Activated naive CD4-positive, alpha-beta T cell treated with anti-CD3 and anti-CD28 coated beads for 36 hours (primary cell): ENCODE measurements at regions of chr6 and their contacts with region 1.

Region 1: DNA sequence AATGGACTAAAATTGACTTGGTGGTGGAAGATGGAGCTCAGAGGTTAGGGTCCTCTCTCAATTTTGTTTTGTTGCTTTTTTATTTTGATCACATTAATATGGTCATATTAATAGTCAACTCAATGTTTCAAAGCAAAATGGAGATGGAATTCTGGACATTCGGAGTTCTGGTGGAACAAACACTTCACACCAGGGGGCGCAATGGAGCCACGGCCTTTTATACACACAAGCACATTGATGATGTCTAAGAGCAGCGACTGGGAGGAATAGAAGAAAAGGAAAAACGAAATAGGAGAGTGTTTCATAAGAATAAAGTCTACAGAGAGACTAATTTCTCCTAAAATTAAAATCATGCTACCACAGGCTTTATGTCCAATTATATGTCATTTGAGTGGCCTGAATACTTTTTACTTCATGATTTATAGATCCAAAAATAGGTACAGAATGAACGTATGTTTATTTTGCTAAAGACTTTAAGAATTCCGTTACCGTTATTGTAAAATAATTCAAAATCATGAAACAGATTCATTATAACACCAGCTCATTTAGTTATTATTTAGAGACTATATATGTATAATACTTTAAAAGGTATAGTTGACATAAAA is 197.6 kb upstream of the SASH1 start:
- DNase-seq: peak; percentile 83
- H3K4me3 Mint-ChIP-seq: no peak overlapping the region
- H3K27ac Mint-ChIP-seq: no peak overlapping the region
- H3K4me1 Mint-ChIP-seq: peaks cover 16% of the 10 kb centered on the region
- H3K27me3 Mint-ChIP-seq: no peaks in the 10 kb centered on the region

Region 2: DNA sequence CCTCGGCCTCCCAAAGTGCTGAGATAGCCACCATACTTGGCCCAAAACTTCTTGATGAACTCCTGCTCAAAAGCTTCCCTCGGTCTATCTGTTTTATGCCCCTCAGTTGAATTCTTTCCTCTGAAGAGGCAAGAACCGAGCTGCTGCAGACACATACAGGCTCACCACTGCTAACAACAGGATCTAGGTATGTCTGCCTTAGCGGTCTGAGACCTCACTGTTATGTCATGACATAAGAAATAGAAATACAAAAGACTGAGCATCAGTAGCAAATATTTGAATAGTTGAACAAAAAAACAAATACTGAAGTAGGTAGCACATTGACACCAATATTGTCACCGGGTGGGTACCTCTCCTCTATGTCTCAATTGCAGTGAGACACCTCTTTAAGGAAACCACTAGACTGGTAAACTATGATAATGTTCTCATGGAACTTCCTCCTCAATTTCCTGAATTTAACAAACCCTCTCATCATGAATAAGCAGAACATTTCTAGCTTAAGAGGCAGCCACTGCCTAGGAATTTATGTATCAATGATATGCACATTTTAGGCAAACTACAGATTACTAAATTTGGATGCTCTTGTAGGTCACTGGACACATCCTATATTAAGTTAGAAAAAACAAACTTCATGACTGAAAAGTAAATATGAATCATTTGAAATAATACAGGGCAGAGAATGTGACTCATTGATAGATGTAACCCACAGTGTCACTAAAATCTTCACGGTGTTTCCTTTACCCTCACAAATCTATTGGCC is 950.2 kb before region 1 on chr6:
- CTCF ChIA-PET with region 1: no interaction called
- intact Hi-C with region 1: loop called (anchors 2 kb)
- DNase-seq: no peak
- H3K4me3 Mint-ChIP-seq: peak overlapping the region; percentile 25
- H3K27ac Mint-ChIP-seq: peak overlapping the region; percentile 88
- H3K4me1 Mint-ChIP-seq: peaks cover 22% of the 10 kb centered on the region
- H3K27me3 Mint-ChIP-seq: no peaks in the 10 kb centered on the region

Region 3: DNA sequence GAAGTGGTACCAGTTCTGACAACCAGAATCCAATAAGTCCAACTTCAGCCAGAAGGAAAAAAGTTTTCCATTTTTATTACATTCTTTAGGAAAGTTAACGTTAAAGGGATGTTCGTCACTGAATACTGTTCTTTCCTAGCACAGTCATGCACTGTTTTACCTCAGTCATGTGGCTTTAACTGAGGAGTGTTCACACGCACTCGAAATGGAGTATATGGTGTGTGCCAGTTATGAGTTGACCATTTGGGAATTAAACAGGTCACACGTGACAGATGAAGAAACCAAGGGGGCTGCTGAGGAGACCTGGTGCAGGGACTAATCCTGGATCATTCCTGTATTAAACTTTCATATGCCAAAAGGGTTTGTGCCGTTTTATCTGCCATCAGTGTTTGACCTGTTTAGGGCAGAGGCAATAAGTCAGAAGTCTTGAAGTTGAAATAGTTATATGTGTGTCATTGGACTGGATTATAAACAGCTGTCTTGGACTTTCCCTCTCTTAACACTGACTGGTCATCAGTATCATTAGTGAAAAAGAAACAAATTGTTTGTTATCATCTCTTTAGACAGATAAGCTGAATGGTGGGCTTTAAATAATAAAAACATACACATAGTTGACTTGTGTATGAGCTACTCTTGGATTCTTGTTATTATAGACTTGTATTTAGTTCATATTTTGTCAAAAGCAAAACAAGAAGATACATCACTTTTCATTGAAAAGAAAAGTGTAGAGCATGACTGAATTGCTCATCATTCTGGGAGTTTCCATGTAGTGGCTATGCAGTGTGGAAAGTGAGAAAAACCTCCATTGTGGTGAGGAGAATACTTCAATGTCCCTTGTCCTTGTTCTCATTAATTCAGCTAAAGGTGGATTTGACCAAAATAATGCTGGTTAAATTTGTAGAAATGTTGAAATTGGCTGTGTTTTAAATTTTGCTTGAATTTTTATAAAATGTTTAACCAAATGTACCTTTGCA is 760.0 kb before region 1 on chr6:
- CTCF ChIA-PET with region 1: interaction called, 4 read pairs
- intact Hi-C with region 1: loop called (anchors 5 kb)
- DNase-seq: no peak
- H3K4me3 Mint-ChIP-seq: no peak overlapping the region
- H3K27ac Mint-ChIP-seq: no peak overlapping the region
- H3K4me1 Mint-ChIP-seq: peaks cover 13% of the 10 kb centered on the region
- H3K27me3 Mint-ChIP-seq: no peaks in the 10 kb centered on the region

Region 4: DNA sequence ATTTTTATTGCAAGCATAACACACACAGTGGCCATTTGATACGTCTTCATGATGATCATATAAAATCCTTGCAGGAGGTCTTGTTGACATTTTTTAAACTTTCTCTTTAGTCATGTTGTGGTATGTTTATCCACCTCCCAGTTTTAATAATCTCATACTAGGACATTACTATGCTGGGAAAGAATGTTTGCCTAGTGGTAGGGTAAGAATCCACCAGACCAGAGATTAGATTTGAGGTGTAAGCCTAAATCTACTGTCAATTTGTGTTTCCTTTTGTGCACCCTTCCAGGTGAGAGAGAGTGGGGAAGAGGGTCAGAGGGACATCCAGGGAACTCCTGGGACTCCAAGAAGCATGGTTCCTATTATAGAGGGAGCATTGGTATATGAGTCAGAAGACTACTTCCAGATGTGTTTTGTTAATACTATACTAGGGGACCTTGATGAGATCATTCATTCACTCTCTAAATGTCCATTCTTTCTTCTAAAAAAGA is 100.7 kb before region 1 on chr6:
- CTCF ChIA-PET with region 1: no interaction called
- intact Hi-C with region 1: no loop called
- DNase-seq: no peak
- H3K4me3 Mint-ChIP-seq: no peak overlapping the region
- H3K27ac Mint-ChIP-seq: no peak overlapping the region
- H3K4me1 Mint-ChIP-seq: no peaks in the 10 kb centered on the region
- H3K27me3 Mint-ChIP-seq: no peaks in the 10 kb centered on the region

Region 5: GRCh38 chr6:148177589-148178233 is 32.7 kb after region 1 on chr6:
- CTCF ChIA-PET with region 1: interaction called, 10 read pairs
- intact Hi-C with region 1: no loop called
- DNase-seq: peak; percentile 37
- H3K4me3 Mint-ChIP-seq: no peak overlapping the region
- H3K27ac Mint-ChIP-seq: no peak overlapping the region
- H3K4me1 Mint-ChIP-seq: no peaks in the 10 kb centered on the region
- H3K27me3 Mint-ChIP-seq: peaks cover 15% of the 10 kb centered on the region

Region 6: GRCh38 chr6:148440877-148441453 is 295.9 kb after region 1 on chr6:
- CTCF ChIA-PET with region 1: interaction called, 3 read pairs
- intact Hi-C with region 1: loop called (anchors 1 kb)
- DNase-seq: no peak
- H3K4me3 Mint-ChIP-seq: no peak overlapping the region
- H3K27ac Mint-ChIP-seq: no peak overlapping the region
- H3K4me1 Mint-ChIP-seq: peaks cover 13% of the 10 kb centered on the region
- H3K27me3 Mint-ChIP-seq: peaks cover 12% of the 10 kb centered on the region